ENCODE measurements at regions of chr5 and their contacts with region 1.

Region 1: DNA sequence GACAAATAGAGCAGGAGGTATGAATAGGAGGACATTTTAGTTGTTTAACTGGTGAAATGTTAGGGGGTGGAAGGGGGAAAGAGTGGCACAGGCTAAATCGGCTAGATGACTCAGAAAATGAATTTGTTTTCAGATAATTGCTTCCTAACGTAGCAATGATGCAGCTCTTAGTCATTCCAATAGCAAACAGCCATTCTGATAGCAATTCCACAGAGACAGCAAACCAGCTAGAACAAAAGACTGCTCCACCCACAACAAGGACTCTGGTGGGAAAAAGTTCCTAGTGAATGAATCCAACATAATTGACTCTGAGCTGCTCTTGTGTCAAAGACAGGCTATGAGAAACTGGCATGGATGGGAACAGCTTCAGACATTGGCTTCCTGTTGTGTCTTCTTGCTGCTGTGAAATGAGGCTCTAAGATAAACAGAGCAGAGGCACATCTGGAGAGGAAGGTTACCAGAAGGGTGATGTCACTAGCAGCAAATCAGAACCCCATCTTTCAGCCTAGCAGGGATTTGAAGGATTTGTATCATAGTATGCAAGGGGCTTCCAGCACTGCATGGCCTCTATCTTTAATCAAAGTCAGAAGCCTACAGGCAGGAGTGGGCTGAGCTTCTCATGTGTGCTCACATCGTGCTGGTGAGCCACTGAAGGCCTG is 28.1 kb upstream of the F2RL1 start:
- DNase-seq: peak in 1 of 2 donors; percentile 72
- H3K4me3 ChIP-seq: no peak overlapping the region
- H3K27ac ChIP-seq: peak overlapping the region; percentile 73 to 76
- H3K4me1 ChIP-seq: peaks cover 3 to 20% of the 10 kb centered on the region in 2 donors
- H3K27me3 ChIP-seq: no peaks in the 10 kb centered on the region
- CTCF ChIP-seq: no peak

Region 2: GRCh38 chr5:76715736-76716455 is 74.9 kb before region 1 on chr5 and contains the start of gene F2R:
- intact Hi-C with region 1: loop called (anchors 5 kb)
- DNase-seq: peak in 1 of 2 donors; percentile 69
- H3K4me3 ChIP-seq: peak within 1 kb of the TSS; percentile 76 to 99
- H3K27ac ChIP-seq: peak within 1 kb of the TSS; percentile 54 to 62
- H3K4me1 ChIP-seq: peaks cover 7 to 9% of the 10 kb centered on the region in 2 donors
- H3K27me3 ChIP-seq: no peaks in the 10 kb centered on the region
- CTCF ChIP-seq: peak; percentile 22 to 47 (median 40)
- total RNA-seq, gene F2R: 131 TPM

Region 3: DNA sequence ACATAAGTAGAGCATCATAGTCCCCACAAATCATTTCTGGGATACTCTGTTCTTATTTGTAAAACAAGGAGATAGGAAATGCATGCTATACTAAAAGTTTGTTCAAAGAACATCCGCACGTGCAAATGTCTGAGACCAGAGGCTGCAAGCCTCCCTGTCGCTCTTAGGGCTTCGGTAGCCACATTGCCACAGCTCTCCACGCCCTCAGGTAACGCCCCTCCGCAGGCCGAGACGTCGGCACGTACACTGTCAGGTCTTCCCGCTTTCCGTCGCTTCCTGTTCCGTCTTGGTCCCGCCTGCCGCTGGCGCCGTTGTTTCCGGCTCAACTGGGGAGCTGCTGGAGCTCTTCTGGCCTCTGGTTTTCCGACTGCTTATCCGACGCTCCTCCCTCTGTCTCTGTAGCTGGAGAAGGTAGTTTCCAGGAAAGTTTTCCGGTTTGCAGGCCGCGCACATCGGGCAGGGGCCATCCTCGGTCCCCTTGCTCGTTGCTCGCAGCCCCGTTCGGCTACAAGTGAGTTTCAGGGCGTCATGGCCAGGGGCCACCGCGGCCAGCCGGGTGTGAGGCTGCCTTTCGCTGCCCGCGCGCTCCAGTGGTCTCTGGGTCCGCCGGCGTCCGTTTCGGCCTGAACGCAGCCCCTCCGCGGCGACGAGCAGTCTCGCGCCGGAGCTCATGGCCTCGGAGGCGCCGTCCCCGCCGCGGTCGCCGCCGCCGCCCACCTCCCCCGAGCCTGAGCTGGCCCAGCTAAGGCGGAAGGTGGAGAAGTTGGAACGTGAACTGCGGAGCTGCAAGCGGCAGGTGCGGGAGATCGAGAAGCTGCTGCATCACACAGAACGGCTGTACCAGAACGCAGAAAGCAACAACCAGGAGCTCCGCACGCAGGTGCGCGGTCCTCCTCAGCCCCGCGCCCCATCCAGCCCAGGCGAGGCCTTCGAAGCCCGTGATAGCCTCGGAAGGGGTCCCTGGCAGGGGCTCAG is 239.6 kb after region 1 on chr5 and contains the start of gene AGGF1:
- intact Hi-C with region 1: loop called (anchors 10 kb)
- DNase-seq: peak; percentile 71 to 96
- H3K4me3 ChIP-seq: peak within 1 kb of the TSS; percentile 71 to 91
- H3K27ac ChIP-seq: peak within 1 kb of the TSS; percentile 82 to 96
- H3K4me1 ChIP-seq: peaks cover 0 to 11% of the 10 kb centered on the region in 2 donors
- H3K27me3 ChIP-seq: no peaks in the 10 kb centered on the region
- CTCF ChIP-seq: no peak
- total RNA-seq, gene AGGF1: 60.3 TPM

Measured in ascending aorta (tissue), 2 donors.